ENCODE measurements at regions of chr5 and their contacts with region 1.

Region 1: GRCh38 chr5:102223542-102224477 is 72.3 kb downstream of the SLCO4C1 start:
- DNase-seq: no peak
- H3K4me3 Mint-ChIP-seq: no peak overlapping the region
- H3K27ac Mint-ChIP-seq: no peak overlapping the region
- H3K4me1 Mint-ChIP-seq: no peaks in the 10 kb centered on the region
- H3K27me3 Mint-ChIP-seq: peaks cover 4% of the 10 kb centered on the region

Region 2: GRCh38 chr5:101977729-101978345 is 246.0 kb before region 1 on chr5:
- CTCF ChIA-PET with region 1: no interaction called
- intact Hi-C with region 1: loop called (anchors 1 kb)
- DNase-seq: no peak
- H3K4me3 Mint-ChIP-seq: no peak overlapping the region
- H3K27ac Mint-ChIP-seq: no peak overlapping the region
- H3K4me1 Mint-ChIP-seq: no peaks in the 10 kb centered on the region
- H3K27me3 Mint-ChIP-seq: no peaks in the 10 kb centered on the region

Region 3: GRCh38 chr5:102153003-102153759 is 70.6 kb before region 1 on chr5:
- CTCF ChIA-PET with region 1: no interaction called
- intact Hi-C with region 1: loop called (anchors 2 kb)
- DNase-seq: no peak
- H3K4me3 Mint-ChIP-seq: no peak overlapping the region
- H3K27ac Mint-ChIP-seq: no peak overlapping the region
- H3K4me1 Mint-ChIP-seq: no peaks in the 10 kb centered on the region
- H3K27me3 Mint-ChIP-seq: no peaks in the 10 kb centered on the region

Measured in activated naive CD4-positive, alpha-beta T cell treated with anti-CD3 and anti-CD28 coated beads for 36 hours (primary cell).